Heart right ventricle (tissue), 16 donors: ENCODE measurements at regions of chr11 and their contacts with region 1.

Region 1: DNA sequence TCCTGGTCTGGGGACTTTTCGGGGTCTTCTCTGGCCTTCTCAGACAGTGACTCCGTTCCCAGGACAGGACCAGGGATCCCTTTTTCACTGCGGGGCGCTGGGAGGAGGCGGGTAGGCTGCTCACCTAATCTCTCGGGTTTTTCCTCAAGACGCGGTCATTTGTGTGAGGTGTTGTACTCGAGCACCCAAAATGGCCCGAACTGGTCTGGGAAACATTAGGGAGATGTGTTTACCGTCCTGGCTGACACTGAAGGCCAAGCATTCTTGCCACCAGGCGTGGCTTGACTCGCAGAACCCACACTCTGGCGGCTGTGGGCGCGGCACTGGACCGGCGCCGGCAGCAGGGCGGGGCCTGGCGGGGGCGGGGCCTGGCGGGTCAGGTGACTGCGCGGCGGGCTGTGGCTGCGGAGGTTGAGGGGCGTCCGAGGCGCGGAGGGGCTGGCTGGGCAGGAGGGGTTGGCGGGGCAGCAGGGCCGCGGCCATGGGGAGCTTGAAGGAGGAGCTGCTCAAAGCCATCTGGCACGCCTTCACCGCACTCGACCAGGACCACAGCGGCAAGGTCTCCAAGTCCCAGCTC is at the start of gene SWAP70:
- DNase-seq: peak; percentile 89 to 92
- ATAC-seq: peak; percentile 96 to 98 (median 97)
- H3K4me3 ChIP-seq: peak within 1 kb of the TSS; percentile 67 to 100 (median 88)
- H3K27ac ChIP-seq: peak within 1 kb of the TSS; percentile 87 to 98 (median 95)
- H3K4me1 ChIP-seq: peaks cover 0 to 36% (median 6%) of the 10 kb centered on the region in 9 donors
- H3K27me3 ChIP-seq: no peaks in the 10 kb centered on the region
- CTCF ChIP-seq: peak; percentile 24 to 63 (median 35)
- total RNA-seq, gene SWAP70: 15.9 to 33.4 (median 20.8) TPM

Region 2: DNA sequence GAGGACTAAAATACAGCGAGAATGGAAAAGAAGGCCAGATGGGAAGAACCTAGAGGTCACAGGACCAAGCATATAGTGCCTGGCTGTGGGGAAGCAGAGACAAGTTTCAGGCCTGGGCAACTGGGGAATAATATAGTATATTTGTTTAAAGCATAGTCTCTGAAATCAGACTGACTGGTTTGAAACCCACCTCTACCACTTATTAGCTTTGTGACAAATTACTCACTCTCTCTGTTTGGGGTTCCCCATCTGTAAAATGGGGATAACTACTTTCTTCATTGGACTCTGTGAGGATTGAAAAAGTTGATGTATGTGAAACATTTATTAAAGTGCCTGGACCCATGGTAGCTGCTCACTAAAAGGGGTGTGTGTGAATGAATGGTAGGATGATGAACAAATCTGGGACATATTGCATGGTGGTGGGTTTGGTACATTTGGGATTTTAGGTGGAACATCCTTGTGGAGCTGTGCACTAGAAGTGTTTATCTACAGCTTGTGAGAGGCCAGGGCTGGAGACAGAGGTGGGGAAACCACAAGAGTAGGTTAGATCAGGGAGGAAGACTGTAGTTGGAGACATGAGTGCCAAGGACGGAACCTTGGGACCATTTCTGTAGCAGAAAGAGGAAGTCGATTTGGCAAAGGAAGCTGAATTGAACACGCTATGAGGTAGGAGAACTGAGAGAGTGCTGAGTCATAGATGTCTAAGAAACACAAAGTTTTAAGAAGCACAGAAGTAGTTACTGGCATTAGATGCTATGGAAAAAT is 52.7 kb after region 1 on chr11:
- intact Hi-C with region 1: loop called in 4 of 10 experiments (anchors 2 to 10 kb)
- DNase-seq: peak in 1 of 2 donors; percentile 68
- ATAC-seq: peak; percentile 75 to 90 (median 84)
- H3K4me3 ChIP-seq: no peak overlapping the region
- H3K27ac ChIP-seq: peak overlapping the region in 8 of 10 donors; percentile 59 to 91 (median 81)
- H3K4me1 ChIP-seq: peaks cover 5 to 75% (median 56%) of the 10 kb centered on the region in 9 donors
- H3K27me3 ChIP-seq: no peaks in the 10 kb centered on the region
- CTCF ChIP-seq: no peak

Region 3: DNA sequence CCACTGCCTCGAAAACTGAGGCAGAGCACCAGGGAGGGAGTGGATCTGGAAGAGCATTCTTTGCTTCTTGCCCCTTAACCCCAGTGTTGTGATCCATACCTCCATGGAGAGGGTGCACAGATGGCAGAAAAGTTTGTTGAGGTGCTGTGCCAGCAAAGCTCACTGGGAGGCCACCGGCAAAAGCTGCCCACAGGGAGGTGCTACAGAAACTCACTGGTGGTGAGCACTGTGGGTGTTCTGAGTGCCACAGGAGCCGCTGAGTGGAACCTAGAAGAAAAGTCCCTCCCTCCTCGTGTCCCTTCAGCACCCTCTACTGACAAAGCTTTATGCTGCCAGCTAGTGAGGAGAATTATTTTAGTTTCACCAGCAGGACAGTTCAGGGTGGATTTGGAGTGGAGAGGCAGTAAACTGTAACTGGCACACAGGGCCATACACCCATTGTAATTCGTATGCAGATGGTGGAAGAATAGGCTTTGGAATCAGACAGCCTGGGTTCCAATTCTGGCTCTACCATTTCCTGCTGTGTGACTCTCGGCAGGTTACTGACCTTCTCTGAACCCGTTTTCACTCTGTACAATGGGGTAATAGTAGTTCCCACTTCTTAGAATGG is 84.7 kb after region 1 on chr11:
- intact Hi-C with region 1: loop called in 1 of 10 experiments (anchors 10 kb)
- DNase-seq: peak in 1 of 2 donors; percentile 63
- ATAC-seq: peak; percentile 64 to 88 (median 86)
- H3K4me3 ChIP-seq: no peak overlapping the region
- H3K27ac ChIP-seq: peak overlapping the region in 4 of 10 donors; percentile 17 to 51 (median 36)
- H3K4me1 ChIP-seq: peaks cover 0 to 25% (median 16%) of the 10 kb centered on the region in 9 donors
- H3K27me3 ChIP-seq: no peaks in the 10 kb centered on the region
- CTCF ChIP-seq: peak; percentile 53 to 79 (median 69)